Right ventricle myocardium inferior (tissue), 1 donor: ENCODE measurements at regions of chr1 and their contacts with region 1.

Region 1: DNA sequence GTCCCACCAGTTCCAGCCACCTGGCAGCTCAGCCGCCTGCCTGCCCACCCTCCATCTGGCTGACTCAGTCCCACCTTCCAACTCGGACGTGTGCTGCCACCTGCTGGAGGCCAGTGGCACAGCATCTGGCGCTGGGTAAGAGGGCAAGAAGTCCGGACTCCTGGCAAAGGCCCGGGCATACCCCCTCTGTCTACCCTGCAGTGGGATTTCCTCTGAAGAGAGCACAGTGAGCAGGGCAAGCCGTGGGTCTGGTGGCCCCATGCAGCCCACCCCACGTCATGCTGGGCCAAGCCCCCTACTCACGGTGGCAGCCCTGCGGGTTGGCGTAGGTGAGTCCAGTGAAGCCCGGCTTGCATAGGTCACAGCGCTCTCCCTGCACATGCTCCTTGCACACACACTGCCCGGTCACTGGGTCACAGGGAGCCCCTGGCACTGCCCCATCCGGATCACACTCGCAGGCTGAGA is 24.5 kb downstream of the LAMB3 start:
- DNase-seq: peak; percentile 86
- ATAC-seq: peak; percentile 75

Region 2: DNA sequence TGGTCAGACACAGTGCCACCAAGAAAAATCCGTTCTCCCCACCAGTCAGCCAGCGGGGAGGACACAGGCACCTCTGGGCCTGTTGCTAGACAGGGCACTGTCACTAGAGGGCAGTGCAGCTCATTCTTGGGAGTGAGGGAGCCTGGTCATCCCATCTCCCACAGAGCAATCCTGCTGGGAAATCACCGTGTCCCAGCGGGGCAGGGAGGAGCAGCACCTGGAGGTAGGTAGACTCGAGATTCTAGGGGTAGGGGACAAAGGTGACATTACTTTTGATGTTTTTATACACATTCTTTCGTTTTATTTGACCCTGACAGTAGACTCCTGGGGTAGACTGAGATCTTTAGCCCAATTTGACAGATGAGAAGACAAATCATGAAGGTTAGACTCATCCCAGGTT is 51.0 kb before region 1 on chr1:
- intact Hi-C with region 1: loop called (anchors 2 kb)
- DNase-seq: peak; percentile 80
- ATAC-seq: peak; percentile 93

Region 3: GRCh38 chr1:209601809-209602657 is 25.7 kb before region 1 on chr1:
- intact Hi-C with region 1: loop called (anchors 2 kb)
- DNase-seq: no peak
- ATAC-seq: peak; percentile 85

Region 4: GRCh38 chr1:209899948-209900347 is 272.2 kb after region 1 on chr1:
- intact Hi-C with region 1: no loop called
- DNase-seq: no peak
- ATAC-seq: no peak